SK-N-SH (cell line): ENCODE measurements at regions of chr7 and their contacts with region 1.

Region 1: DNA sequence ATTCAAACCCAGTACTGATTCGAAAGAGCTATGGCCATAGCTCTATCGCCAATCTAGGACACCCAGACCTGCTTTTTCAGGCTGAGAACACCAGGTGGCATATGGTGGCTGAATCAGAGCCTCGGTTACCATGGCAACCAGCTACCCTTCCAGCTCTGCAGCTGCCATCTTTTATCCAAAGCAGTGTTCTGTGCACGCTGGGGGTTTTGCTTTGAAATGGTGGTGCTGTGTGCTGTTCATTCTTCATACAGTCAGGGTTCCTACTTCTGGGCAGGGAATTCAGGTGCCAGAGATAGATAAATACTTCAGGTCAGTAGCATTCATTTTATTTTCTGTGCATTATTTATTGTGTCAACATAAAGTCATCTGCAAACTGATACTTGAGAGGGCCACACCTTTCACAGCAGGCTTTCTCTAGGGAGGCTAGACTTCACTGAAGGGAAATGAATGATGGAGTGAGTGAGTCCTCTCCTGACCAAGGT is 85.4 kb downstream of the AKR1D1 start:
- DNase-seq: peak; percentile 91
- H3K4me3 ChIP-seq: peak overlapping the region in 1 of 2 experiments; percentile 7; a peak in 1 of 4 replicates
- H3K27ac ChIP-seq: peak overlapping the region in 1 of 2 experiments; percentile 86; a peak in 2 of 4 replicates
- H3K4me1 ChIP-seq: peaks cover 0 to 9% of the 10 kb centered on the region in 2 experiments; a peak in 2 of 4 replicates
- H3K27me3 ChIP-seq: no peaks in the 10 kb centered on the region
- CTCF ChIP-seq: peak; percentile 59
- EP300 ChIP-seq: 0 out of 4 replicates have a peak, but pooled peaks of 1 of the 2 experiments have one; percentile 31
- RAD21 ChIP-seq: peak; percentile 96

Region 2: DNA sequence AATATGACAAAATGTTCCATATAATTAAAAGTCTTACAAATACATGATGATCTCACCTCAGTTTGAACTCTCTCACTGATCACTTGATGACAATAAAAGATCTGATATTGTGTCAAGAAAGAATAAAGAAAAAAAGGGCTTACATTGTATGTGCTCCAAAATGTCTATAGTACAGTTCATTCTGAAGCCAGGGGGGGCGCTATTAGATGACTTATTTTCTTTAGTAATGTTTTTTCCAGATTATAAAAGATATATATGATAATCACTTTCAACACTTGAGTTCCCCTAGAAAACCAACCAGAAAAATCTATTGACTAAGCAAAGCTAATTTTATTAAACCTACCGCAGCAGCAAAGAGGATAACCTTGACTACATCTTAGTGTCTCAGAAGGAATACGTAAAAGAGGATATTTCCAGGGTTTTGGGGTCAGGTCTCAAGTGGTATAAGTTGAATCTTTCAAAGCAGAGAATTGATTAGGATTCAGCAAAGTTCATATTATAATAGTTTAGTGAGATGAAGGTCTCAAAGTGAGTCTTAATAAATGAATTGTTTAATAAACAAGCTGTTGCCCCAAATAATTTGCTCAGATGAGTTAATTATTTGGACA is 873.9 kb before region 1 on chr7:
- CTCF ChIA-PET with region 1: no interaction called
- POLR2A ChIA-PET with region 1: no interaction called
- DNase-seq: no peak
- H3K4me3 ChIP-seq: no peak overlapping the region
- H3K27ac ChIP-seq: no peak overlapping the region
- H3K4me1 ChIP-seq: no peaks in the 10 kb centered on the region; a peak in 1 of 4 replicates
- H3K27me3 ChIP-seq: no peaks in the 10 kb centered on the region
- CTCF ChIP-seq: peak; percentile 69
- EP300 ChIP-seq: no peak
- RAD21 ChIP-seq: no peak

Region 3: GRCh38 chr7:138142583-138143201 is 18.9 kb before region 1 on chr7:
- CTCF ChIA-PET with region 1: interaction called, 13 read pairs
- POLR2A ChIA-PET with region 1: no interaction called
- DNase-seq: peak; percentile 65
- H3K4me3 ChIP-seq: no peak overlapping the region
- H3K27ac ChIP-seq: peak overlapping the region; percentile 28 to 79; a peak in 3 of 4 replicates
- H3K4me1 ChIP-seq: peaks cover 0 to 7% of the 10 kb centered on the region in 2 experiments; a peak in 2 of 4 replicates
- H3K27me3 ChIP-seq: no peaks in the 10 kb centered on the region
- CTCF ChIP-seq: no peak
- EP300 ChIP-seq: peak in 1 of 2 experiments; percentile 89; a peak in 2 of 4 replicates
- RAD21 ChIP-seq: peak; percentile 12; the same call in 1 of the 2 replicates

Region 4: DNA sequence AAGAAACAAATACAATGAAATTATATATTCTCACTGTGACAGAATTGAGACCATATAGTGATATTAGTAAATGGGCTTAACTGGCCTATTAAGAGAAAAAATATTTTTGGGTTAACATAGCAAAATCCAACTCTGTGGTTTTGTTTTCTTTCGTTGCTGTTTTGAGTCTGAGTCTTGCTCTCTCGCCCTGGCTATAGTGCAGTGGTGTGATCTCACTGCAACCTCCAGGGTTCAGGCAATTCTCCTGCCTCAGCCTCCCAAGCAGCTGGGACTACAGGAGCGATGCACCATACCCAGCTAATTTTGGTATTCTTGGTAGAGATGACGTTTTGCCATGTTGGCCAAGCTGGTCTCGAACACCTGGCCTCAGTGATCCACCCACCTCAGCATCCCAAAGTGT is 313.7 kb after region 1 on chr7:
- CTCF ChIA-PET with region 1: no interaction called
- POLR2A ChIA-PET with region 1: no interaction called
- DNase-seq: no peak
- H3K4me3 ChIP-seq: no peak overlapping the region
- H3K27ac ChIP-seq: no peak overlapping the region
- H3K4me1 ChIP-seq: peaks cover 0 to 2% of the 10 kb centered on the region in 2 experiments; a peak in 1 of 4 replicates
- H3K27me3 ChIP-seq: no peaks in the 10 kb centered on the region
- CTCF ChIP-seq: no peak
- EP300 ChIP-seq: no peak
- RAD21 ChIP-seq: no peak

Region 5: DNA sequence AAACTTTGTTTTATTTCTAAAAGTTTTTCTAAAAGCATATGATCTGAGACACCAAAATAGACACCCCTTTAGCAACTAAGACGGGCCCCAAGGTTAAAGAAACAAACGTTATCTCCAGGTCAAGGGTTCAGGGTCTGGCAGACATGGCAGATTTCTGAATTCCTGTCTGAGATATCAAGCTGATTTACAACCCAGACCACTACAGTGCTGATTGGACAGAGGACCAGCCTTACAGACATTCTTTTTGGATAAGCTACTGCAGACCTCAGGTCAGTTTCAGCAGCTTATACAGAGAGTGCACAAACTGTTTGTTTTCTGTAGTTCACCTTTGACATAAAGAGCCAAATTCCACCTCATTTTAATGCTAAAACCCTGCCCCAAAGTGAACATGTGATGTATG is 504.7 kb after region 1 on chr7:
- CTCF ChIA-PET with region 1: interaction called, 12 read pairs
- POLR2A ChIA-PET with region 1: no interaction called
- DNase-seq: peak; percentile 58
- H3K4me3 ChIP-seq: no peak overlapping the region
- H3K27ac ChIP-seq: peak overlapping the region in 1 of 2 experiments; percentile 90; a peak in 2 of 4 replicates
- H3K4me1 ChIP-seq: peaks cover 0 to 47% of the 10 kb centered on the region in 2 experiments; a peak in 2 of 4 replicates
- H3K27me3 ChIP-seq: no peaks in the 10 kb centered on the region
- CTCF ChIP-seq: no peak
- EP300 ChIP-seq: peak in 1 of 2 experiments; percentile 95; a peak in 2 of 4 replicates
- RAD21 ChIP-seq: no peak; the same call in 1 of the 2 replicates